Panc1 (cell line): ENCODE measurements at regions of chr17 and their contacts with region 1.

Region 1: DNA sequence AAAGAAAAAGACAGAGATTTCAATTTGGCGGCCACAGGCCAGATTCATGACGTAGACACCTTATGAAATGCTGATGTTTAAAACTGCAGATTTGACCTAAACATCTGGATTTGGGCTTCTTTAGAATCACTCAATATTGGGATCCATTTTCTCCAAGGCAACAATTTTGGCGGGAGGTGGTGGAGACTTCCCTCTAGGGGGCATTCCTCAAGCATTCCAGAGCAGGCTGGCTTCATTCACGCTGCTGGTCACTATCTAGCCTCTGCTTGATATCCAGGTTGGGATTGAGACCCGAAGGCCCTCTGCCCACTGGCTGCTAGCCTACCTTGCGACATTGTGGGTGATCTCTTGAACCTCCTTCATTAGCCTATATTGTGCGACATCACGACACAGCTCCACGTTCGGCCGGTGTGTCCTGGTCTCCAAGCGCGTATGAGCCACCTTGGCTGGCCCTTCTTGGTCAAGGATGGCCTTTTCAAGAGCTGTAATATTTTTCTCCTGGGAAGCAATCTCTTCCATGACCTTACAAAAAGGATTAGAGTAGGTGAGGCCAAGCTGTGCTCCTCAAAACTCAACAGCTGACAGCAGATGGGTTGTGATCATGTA is 24.5 kb downstream of the FBXO39 start:
- DNase-seq: no peak
- ATAC-seq: peak; percentile 77
- H3K4me3 ChIP-seq: no peak overlapping the region
- H3K27ac ChIP-seq: no peak overlapping the region
- H3K4me1 ChIP-seq: no peaks in the 10 kb centered on the region
- H3K27me3 ChIP-seq: no peaks in the 10 kb centered on the region
- CTCF ChIP-seq: peak; percentile 86

Region 2: GRCh38 chr17:6666077-6666521 is 134.4 kb before region 1 on chr17:
- CTCF ChIA-PET with region 1: no interaction called
- POLR2A ChIA-PET with region 1: no interaction called
- in situ Hi-C with region 1: no loop called
- intact Hi-C with region 1: loop called (anchors 1 kb)
- DNase-seq: no peak
- ATAC-seq: peak; percentile 93
- H3K4me3 ChIP-seq: no peak overlapping the region
- H3K27ac ChIP-seq: no peak overlapping the region
- H3K4me1 ChIP-seq: no peaks in the 10 kb centered on the region
- H3K27me3 ChIP-seq: peaks cover 3% of the 10 kb centered on the region; the same call in 1 of the 2 replicates
- CTCF ChIP-seq: peak; percentile 92

Region 3: DNA sequence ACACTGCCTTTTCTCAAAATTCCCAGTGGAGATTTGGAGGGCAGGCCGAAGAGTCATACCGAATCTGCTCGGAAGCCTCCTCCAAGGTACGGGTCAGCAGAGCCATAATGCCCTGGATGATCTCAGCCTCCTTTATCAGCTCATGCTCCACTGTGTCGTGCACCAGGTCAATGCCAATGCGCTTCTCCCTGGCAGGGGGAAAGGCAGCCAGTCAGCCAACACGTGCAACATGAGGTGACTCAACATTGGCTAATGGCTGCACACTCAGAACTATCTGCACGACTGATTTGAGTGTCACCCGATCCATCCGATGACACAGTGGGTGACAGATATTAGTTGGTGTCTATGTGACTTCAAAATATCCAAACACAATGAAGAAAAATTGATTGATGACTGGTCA is 15.2 kb after region 1 on chr17:
- CTCF ChIA-PET with region 1: interaction called, 10 read pairs
- POLR2A ChIA-PET with region 1: no interaction called
- in situ Hi-C with region 1: no loop called
- intact Hi-C with region 1: no loop called
- DNase-seq: no peak
- ATAC-seq: no peak
- H3K4me3 ChIP-seq: no peak overlapping the region
- H3K27ac ChIP-seq: no peak overlapping the region
- H3K4me1 ChIP-seq: no peaks in the 10 kb centered on the region
- H3K27me3 ChIP-seq: peaks cover 3% of the 10 kb centered on the region
- CTCF ChIP-seq: no peak